IMR-90 (cell line): ENCODE measurements at regions of chr6 and their contacts with region 1.

Region 1: DNA sequence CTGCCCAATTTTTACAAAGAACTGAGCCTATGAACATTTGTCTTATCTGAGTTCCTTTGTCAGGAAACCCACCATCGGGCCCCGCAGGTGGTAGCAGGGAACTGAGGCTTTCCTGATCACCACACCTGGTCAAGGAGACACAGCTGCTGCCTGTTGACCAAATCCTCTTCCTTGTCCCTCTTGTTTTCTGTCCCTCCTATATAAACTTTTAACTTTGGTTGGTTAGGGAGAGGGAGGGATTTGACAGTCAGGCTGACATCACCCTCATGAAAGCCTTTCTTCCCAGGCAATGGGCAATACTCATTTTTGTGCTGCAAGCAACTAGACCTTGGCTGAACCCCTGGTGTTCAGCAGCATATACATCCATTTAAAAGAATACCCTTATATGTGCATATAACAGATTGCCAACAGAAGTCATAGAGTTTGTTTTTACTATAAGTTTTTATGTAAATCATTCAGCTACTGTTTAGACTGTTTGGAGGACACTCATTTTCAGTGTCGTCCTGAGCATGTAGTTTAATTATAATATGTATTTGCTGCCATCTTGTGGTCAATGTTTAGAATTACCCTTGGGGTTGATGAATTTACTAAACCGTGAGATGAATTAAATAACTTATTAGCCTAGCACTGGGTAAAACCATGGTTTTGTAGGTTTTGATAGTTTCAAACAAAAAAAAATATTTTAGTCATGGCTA is 17.0 kb downstream of the CRISP1 start:
- DNase-seq: peak; percentile 55
- ATAC-seq: peak; percentile 80
- H3K4me3 ChIP-seq: no peak overlapping the region
- H3K27ac ChIP-seq: no peak overlapping the region
- H3K4me1 ChIP-seq: no peaks in the 10 kb centered on the region
- H3K27me3 ChIP-seq: no peaks in the 10 kb centered on the region
- CTCF ChIP-seq: peak; percentile 62
- POLR2A ChIP-seq: no peak
- RAD21 ChIP-seq: peak; percentile 48

Region 2: DNA sequence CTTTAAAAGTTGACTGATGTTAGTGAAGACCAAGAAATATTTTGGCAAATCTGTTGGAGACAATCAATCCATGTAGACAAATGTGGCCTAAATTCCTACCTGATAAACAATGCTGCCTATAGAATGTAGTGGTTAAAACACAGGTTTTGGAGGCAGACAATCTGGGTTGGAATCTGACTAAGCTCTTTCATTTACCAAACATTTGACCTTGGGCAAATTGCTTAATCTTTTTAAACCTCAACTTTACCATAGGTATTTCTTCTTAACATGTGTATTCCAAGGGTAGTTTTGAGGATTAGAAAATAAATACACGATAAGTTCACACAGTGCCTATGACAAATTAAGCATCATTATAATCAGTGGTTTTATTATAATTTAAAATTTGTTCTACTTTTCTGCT is 224.2 kb before region 1 on chr6:
- CTCF ChIA-PET with region 1: interaction called, 6 read pairs
- POLR2A ChIA-PET with region 1: no interaction called
- dilution Hi-C with region 1: no loop called
- in situ Hi-C with region 1: loop called (anchors 5 kb)
- intact Hi-C with region 1: loop called (anchors 1 kb)
- DNase-seq: no peak
- ATAC-seq: no peak
- H3K4me3 ChIP-seq: no peak overlapping the region
- H3K27ac ChIP-seq: no peak overlapping the region
- H3K4me1 ChIP-seq: no peaks in the 10 kb centered on the region
- H3K27me3 ChIP-seq: no peaks in the 10 kb centered on the region
- CTCF ChIP-seq: no peak
- POLR2A ChIP-seq: no peak
- RAD21 ChIP-seq: no peak

Region 3: GRCh38 chr6:50381099-50381415 is 531.7 kb after region 1 on chr6:
- CTCF ChIA-PET with region 1: no interaction called
- POLR2A ChIA-PET with region 1: no interaction called
- dilution Hi-C with region 1: no loop called
- in situ Hi-C with region 1: no loop called
- intact Hi-C with region 1: no loop called
- DNase-seq: no peak
- ATAC-seq: no peak
- H3K4me3 ChIP-seq: no peak overlapping the region
- H3K27ac ChIP-seq: no peak overlapping the region
- H3K4me1 ChIP-seq: no peaks in the 10 kb centered on the region
- H3K27me3 ChIP-seq: no peaks in the 10 kb centered on the region
- CTCF ChIP-seq: no peak
- POLR2A ChIP-seq: no peak
- RAD21 ChIP-seq: no peak